Heart left ventricle (tissue), 16 donors: ENCODE measurements at regions of chr6 and their contacts with region 1.

Region 1: DNA sequence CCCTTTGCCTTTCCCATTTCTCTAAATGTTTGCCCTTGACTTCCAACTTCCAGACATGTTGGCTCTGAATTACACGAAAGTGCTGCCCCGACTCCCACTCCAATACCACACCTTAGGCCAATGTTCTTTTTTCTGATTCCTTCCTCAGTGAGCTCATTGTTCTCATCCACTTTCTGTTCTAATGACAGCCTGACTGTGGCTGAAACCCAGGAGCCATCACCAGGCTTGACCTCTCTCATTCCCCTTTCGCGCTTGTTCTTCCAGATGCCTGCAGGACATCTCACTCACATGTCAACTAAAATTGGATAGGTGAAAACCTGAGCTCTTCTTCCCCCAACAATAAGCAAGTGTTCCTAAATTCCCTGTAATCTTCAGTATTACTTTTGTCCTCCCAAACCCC is 40.4 kb downstream of the PTPRK start:
- DNase-seq: no peak
- ATAC-seq: peak in 2 of 4 donors; percentile 51 to 56
- H3K4me3 ChIP-seq: no peak overlapping the region
- H3K27ac ChIP-seq: peak overlapping the region in 3 of 12 donors; percentile 13 to 28 (median 21)
- H3K4me1 ChIP-seq: peaks cover 0 to 60% (median 29%) of the 10 kb centered on the region in 12 donors
- H3K27me3 ChIP-seq: no peaks in the 10 kb centered on the region
- CTCF ChIP-seq: no peak
- POLR2A ChIP-seq: no peak

Region 2: GRCh38 chr6:127855542-127856159 is 624.3 kb before region 1 on chr6:
- intact Hi-C with region 1: no loop called
- DNase-seq: no peak
- ATAC-seq: no peak
- H3K4me3 ChIP-seq: no peak overlapping the region
- H3K27ac ChIP-seq: no peak overlapping the region
- H3K4me1 ChIP-seq: no peaks in the 10 kb centered on the region
- H3K27me3 ChIP-seq: no peaks in the 10 kb centered on the region
- CTCF ChIP-seq: peak in 10 of 12 donors; percentile 30 to 60 (median 42)
- POLR2A ChIP-seq: no peak

Region 3: DNA sequence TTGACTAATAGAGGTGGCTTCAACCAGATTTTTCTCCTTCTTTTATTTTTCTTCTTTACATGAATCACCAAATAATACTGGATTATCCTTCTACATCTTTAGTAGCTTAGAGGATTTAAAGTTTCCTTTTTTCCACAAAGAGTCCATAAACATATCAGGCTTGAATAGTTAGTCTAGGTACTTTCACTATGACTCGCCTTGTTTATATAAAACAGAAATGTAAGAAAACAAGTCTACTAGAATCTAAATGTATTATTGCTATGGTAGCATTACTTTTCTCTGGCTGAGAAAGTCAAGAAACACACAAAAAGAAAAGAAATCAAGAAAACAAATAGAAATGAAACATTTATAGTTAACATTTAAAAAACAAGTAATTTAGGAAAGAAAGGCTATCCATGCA is 174.8 kb before region 1 on chr6:
- intact Hi-C with region 1: no loop called
- DNase-seq: no peak
- ATAC-seq: no peak
- H3K4me3 ChIP-seq: no peak overlapping the region
- H3K27ac ChIP-seq: no peak overlapping the region
- H3K4me1 ChIP-seq: peaks cover 0 to 9% (median 0%) of the 10 kb centered on the region in 12 donors
- H3K27me3 ChIP-seq: no peaks in the 10 kb centered on the region
- CTCF ChIP-seq: no peak
- POLR2A ChIP-seq: no peak

Region 4: GRCh38 chr6:128432394-128432793 is 47.6 kb before region 1 on chr6:
- intact Hi-C with region 1: loop called in 1 of 10 experiments (anchors 2 kb)
- DNase-seq: no peak
- ATAC-seq: no peak
- H3K4me3 ChIP-seq: no peak overlapping the region
- H3K27ac ChIP-seq: no peak overlapping the region
- H3K4me1 ChIP-seq: peaks cover 0 to 15% (median 4%) of the 10 kb centered on the region in 12 donors
- H3K27me3 ChIP-seq: no peaks in the 10 kb centered on the region
- CTCF ChIP-seq: no peak
- POLR2A ChIP-seq: no peak

Region 5: GRCh38 chr6:129946439-129947145 is 1466.6 kb after region 1 on chr6:
- intact Hi-C with region 1: no loop called
- DNase-seq: no peak
- ATAC-seq: no peak
- H3K4me3 ChIP-seq: no peak overlapping the region
- H3K27ac ChIP-seq: no peak overlapping the region
- H3K4me1 ChIP-seq: no peaks in the 10 kb centered on the region
- H3K27me3 ChIP-seq: peaks cover 0 to 9% (median 0%) of the 10 kb centered on the region in 9 donors
- CTCF ChIP-seq: no peak
- POLR2A ChIP-seq: no peak